Activated T-helper 1 cell treated with anti-CD3 and anti-CD28 coated beads, Interleukin-12 subunit alpha, Interleukin-12 subunit beta, Interleukin-2, Interleukin-4 antibody, amounts not matched to agents 30 ng/mL and 10 ng/mL and 1 ng/mL, durations not matched to agents 14 hours and 24 hours and 36 hours (primary cell): ENCODE measurements at regions of chr10 and their contacts with region 1.

Region 1: DNA sequence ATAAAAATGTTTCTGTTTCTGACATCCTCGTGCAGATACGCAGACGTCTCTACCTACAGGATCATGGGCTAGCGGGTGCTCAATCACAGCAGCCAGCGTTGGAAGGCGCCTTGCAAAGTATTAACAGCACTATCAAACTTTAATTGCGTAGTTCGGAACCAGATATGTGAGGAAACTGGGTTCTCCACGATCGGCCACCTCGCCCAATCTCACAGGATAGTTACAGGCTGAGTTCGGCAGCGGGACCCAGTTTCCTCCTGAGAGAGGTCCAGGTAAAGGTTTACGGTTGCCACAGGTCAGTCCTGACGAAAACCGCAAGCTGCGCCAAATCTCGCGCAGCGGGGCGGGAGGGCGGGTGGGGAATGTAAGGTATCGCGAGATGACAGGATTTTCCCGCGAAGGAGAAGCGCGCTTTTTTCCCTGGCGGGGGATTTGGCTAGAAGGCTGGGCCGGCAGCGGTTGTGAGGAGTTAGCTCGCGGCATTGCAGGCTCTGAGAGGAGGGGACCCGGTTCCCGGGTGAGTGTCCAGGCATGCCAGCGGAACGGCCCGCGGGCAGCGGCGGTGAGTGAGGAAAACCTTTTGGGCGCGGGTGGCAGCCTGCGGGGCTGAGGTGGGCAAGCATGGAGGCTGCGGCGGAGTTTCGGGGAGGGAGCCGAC is at the start of gene HELLS:
- DNase-seq: peak; percentile 69
- H3K4me3 Mint-ChIP-seq: peak within 1 kb of the TSS; percentile 99
- H3K27ac Mint-ChIP-seq: peak within 1 kb of the TSS; percentile 96
- H3K4me1 Mint-ChIP-seq: peaks cover 33% of the 10 kb centered on the region
- H3K27me3 Mint-ChIP-seq: peaks cover 13% of the 10 kb centered on the region
- total RNA-seq, gene HELLS: 224 and 228 TPM in 2 replicates

Region 2: GRCh38 chr10:93496322-93497041 is 1049.0 kb before region 1 on chr10 and contains the start of gene CEP55:
- intact Hi-C with region 1: loop called (anchors 10 kb)
- DNase-seq: peak; percentile 96
- H3K4me3 Mint-ChIP-seq: peak within 1 kb of the TSS; percentile 88
- H3K27ac Mint-ChIP-seq: peak within 1 kb of the TSS; percentile 95
- H3K4me1 Mint-ChIP-seq: peaks cover 46% of the 10 kb centered on the region
- H3K27me3 Mint-ChIP-seq: no peaks in the 10 kb centered on the region
- total RNA-seq, gene CEP55: 53.0 and 55.7 TPM in 2 replicates

Region 3: GRCh38 chr10:93893646-93894515 is 651.6 kb before region 1 on chr10 and contains the start of gene SLC35G1:
- intact Hi-C with region 1: loop called (anchors 5 kb)
- DNase-seq: peak; percentile 57
- H3K4me3 Mint-ChIP-seq: peak within 1 kb of the TSS; percentile 85
- H3K27ac Mint-ChIP-seq: peak within 1 kb of the TSS; percentile 57
- H3K4me1 Mint-ChIP-seq: peaks cover 40% of the 10 kb centered on the region
- H3K27me3 Mint-ChIP-seq: peaks cover 6% of the 10 kb centered on the region
- total RNA-seq, gene SLC35G1: 5.6 and 5.8 TPM in 2 replicates

Region 4: DNA sequence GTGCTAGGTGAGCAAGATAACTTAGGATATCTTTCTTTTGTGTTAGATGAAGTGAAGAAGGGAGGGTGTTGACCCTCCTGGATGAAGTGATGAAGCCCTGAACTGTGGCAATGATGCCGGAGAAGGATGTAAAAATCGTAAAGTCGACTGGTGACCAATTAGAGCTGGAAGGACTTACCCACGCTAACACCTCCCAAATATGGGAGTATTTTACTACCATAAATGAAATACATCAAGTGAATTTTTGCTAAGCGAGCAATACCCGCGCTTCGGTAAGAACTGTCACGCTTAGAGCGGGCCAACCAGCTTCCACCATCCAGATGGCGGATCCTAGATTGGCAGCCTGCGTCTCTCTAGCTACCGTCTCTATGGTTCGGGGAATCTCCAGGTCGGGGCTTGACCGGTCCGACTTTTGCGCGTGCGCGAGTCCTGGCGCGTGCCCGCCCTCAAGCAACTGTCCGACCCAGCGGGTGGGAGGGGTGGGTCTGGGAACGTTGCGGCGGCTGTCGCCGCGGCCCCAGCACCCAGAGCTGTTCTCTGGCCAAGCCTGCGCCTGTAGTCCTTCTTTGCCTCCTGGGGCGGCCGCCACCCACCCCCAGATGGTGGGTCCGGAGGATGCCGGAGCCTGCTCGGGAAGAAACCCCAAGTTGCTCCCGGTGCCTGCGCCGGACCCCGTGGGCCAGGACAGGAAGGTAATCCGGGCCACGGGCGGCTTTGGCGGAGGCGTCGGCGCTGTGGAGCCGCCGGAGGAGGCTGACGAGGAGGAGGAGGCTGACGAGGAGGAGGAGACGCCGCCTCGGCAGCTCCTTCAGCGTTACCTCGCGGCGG is 143.3 kb before region 1 on chr10 and contains the start of gene TBC1D12:
- intact Hi-C with region 1: loop called (anchors 2 kb)
- DNase-seq: peak; percentile 16
- H3K4me3 Mint-ChIP-seq: peak within 1 kb of the TSS; percentile 62
- H3K27ac Mint-ChIP-seq: no peak within 1 kb of the TSS
- H3K4me1 Mint-ChIP-seq: peaks cover 4% of the 10 kb centered on the region
- H3K27me3 Mint-ChIP-seq: peaks cover 60% of the 10 kb centered on the region
- total RNA-seq, gene TBC1D12: 0.73 and 0.86 TPM in 2 replicates

Region 5: GRCh38 chr10:94591461-94592205 is 46.1 kb after region 1 on chr10:
- intact Hi-C with region 1: loop called (anchors 1 kb)
- DNase-seq: no peak
- H3K4me3 Mint-ChIP-seq: peak overlapping the region; percentile 46
- H3K27ac Mint-ChIP-seq: peak overlapping the region; percentile 78
- H3K4me1 Mint-ChIP-seq: peaks cover 27% of the 10 kb centered on the region
- H3K27me3 Mint-ChIP-seq: no peaks in the 10 kb centered on the region

Region 6: DNA sequence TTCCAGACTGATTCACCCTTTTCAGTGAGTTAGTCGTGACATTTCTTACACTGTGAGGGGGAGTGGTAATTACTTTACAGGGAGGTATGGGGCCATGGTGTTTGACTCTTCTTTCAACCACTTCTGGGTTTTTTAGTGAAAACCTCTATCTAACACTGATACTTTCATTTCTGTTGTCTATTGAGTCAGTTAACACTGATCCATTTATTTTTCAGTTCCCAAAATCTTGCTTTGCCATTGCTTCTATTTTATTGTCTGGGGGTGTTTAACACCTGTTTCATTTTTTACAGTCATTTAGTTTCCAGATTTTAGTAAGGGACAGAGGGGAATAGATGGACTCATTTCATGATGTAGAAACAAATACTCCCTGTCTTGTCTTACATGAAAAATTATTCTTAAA is 61.6 kb after region 1 on chr10:
- intact Hi-C with region 1: loop called (anchors 1 kb)
- DNase-seq: no peak
- H3K4me3 Mint-ChIP-seq: no peak overlapping the region
- H3K27ac Mint-ChIP-seq: peak overlapping the region; percentile 64
- H3K4me1 Mint-ChIP-seq: peaks cover 23% of the 10 kb centered on the region
- H3K27me3 Mint-ChIP-seq: no peaks in the 10 kb centered on the region

Region 7: DNA sequence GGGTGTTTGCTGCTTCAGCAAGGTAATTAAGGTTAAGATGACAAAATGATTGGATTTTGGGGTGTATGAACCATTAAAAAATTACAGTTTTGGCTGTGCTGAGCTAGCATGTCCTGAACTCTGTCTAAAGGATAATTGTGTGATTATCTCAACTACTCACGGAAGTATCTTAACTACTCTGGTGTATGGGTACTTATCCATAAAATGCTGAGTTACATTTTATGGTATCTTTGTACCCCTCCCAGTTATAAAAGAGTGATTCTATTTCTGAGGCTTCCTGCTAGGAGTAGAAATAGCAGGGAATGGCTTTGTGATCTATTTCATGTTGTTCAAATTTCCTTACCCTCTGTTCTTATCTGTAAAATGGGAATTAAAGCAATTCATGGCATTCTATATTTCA is 160.6 kb after region 1 on chr10:
- intact Hi-C with region 1: no loop called
- DNase-seq: no peak
- H3K4me3 Mint-ChIP-seq: no peak overlapping the region
- H3K27ac Mint-ChIP-seq: no peak overlapping the region
- H3K4me1 Mint-ChIP-seq: no peaks in the 10 kb centered on the region
- H3K27me3 Mint-ChIP-seq: no peaks in the 10 kb centered on the region

Region 8: DNA sequence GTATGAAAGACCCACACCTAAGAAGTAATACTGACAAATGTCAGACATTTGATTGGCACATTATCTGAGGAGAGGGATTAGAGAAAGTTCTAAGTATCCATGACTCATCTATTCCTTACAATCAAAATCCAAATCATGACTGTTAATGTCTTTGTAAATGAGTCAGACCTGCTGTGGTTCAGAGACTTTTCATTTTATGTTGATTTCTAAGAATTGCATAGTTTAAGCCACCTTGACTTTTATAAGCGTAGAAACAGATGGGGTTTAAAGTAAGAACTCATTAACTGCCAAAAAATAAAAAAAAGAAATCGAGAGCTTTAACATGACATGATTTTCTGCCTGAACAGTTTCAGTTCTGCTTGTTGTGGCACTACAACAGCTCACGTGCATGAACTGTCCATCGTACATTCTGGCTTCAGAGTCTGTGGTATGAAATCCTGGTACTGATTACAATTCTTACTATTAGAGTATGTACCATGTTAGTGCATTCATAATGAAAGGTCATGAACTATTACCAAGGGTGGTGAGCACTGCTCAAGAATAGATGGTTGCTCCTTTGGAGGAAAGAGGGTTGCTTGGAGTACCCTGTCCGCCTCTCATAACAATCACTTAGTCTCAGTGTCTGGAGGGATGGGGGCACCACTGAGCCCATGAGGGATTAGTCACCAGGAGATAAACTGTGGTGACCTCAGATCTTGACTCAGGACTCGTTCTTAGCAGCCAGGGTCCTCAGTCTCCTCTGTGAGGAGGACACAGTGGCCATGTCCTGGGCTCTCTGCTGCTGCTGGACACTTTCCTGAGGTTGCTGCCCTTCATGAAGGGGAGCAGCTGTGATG is 690.8 kb after region 1 on chr10:
- intact Hi-C with region 1: loop called (anchors 10 kb)
- DNase-seq: no peak
- H3K4me3 Mint-ChIP-seq: peak overlapping the region; percentile 46
- H3K27ac Mint-ChIP-seq: peak overlapping the region; percentile 89
- H3K4me1 Mint-ChIP-seq: peaks cover 26% of the 10 kb centered on the region
- H3K27me3 Mint-ChIP-seq: peaks cover 3% of the 10 kb centered on the region